IMR-90 (cell line): ENCODE measurements at regions of chr20 and their contacts with region 1.

Region 1: GRCh38 chr20:57493091-57493615 is 31.8 kb downstream of the CTCFL start:
- DNase-seq: no peak
- ATAC-seq: no peak
- H3K4me3 ChIP-seq: no peak overlapping the region
- H3K27ac ChIP-seq: no peak overlapping the region
- H3K4me1 ChIP-seq: no peaks in the 10 kb centered on the region
- H3K27me3 ChIP-seq: peaks cover 2% of the 10 kb centered on the region
- CTCF ChIP-seq: no peak
- POLR2A ChIP-seq: no peak
- RAD21 ChIP-seq: no peak

Region 2: DNA sequence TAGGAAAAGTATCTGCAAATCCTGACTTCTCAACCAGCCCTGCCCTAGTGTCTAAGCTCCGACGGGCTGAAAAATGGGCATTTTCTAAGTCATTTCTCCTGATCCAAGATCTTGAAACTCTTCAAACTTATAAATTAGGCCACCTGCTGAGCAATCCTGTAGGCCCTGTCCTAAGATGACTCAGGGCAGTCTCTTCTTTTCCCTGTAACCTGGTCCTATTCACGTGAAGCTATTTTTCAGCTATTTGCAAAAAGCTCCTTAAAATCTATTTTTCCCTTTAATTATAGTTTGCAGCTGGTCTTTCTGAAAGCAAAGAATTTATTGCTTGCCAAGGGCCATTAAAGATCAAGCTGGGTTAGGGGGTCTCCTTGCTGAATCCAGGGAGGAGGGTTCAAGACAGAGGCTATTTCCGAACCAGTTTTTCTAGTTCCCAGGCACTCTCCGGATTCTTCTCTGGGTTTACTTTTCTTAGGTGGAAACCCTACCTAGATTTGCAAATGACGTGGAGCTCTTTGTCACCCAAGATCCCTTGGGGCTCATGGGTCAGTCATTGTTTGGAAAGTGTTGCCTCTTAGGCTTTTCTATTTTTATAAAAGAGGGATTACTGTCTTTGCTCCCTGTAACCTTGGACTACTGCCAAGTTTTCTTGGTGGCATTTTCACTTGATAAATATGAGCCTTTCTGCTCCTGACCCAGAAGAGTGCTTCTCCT is 926.7 kb before region 1 on chr20:
- CTCF ChIA-PET with region 1: no interaction called
- POLR2A ChIA-PET with region 1: no interaction called
- dilution Hi-C with region 1: no loop called
- in situ Hi-C with region 1: no loop called
- intact Hi-C with region 1: loop called (anchors 5 kb)
- DNase-seq: no peak
- ATAC-seq: no peak
- H3K4me3 ChIP-seq: no peak overlapping the region
- H3K27ac ChIP-seq: no peak overlapping the region
- H3K4me1 ChIP-seq: no peaks in the 10 kb centered on the region
- H3K27me3 ChIP-seq: peaks cover 4% of the 10 kb centered on the region
- CTCF ChIP-seq: no peak
- POLR2A ChIP-seq: no peak
- RAD21 ChIP-seq: no peak

Region 3: GRCh38 chr20:57323034-57323433 is 170.1 kb before region 1 on chr20:
- CTCF ChIA-PET with region 1: no interaction called
- POLR2A ChIA-PET with region 1: no interaction called
- dilution Hi-C with region 1: no loop called
- in situ Hi-C with region 1: no loop called
- intact Hi-C with region 1: no loop called
- DNase-seq: no peak
- ATAC-seq: no peak
- H3K4me3 ChIP-seq: no peak overlapping the region
- H3K27ac ChIP-seq: no peak overlapping the region
- H3K4me1 ChIP-seq: no peaks in the 10 kb centered on the region
- H3K27me3 ChIP-seq: peaks cover 4% of the 10 kb centered on the region; the same call in 1 of the 2 replicates
- CTCF ChIP-seq: no peak
- POLR2A ChIP-seq: no peak
- RAD21 ChIP-seq: no peak

Region 4: GRCh38 chr20:57420531-57421252 is 72.5 kb before region 1 on chr20:
- CTCF ChIA-PET with region 1: no interaction called
- POLR2A ChIA-PET with region 1: no interaction called
- dilution Hi-C with region 1: no loop called
- in situ Hi-C with region 1: no loop called
- intact Hi-C with region 1: no loop called
- DNase-seq: no peak
- ATAC-seq: no peak
- H3K4me3 ChIP-seq: no peak overlapping the region
- H3K27ac ChIP-seq: no peak overlapping the region
- H3K4me1 ChIP-seq: no peaks in the 10 kb centered on the region
- H3K27me3 ChIP-seq: peaks cover 23% of the 10 kb centered on the region; the same call in 1 of the 2 replicates
- CTCF ChIP-seq: no peak
- POLR2A ChIP-seq: no peak
- RAD21 ChIP-seq: no peak

Region 5: DNA sequence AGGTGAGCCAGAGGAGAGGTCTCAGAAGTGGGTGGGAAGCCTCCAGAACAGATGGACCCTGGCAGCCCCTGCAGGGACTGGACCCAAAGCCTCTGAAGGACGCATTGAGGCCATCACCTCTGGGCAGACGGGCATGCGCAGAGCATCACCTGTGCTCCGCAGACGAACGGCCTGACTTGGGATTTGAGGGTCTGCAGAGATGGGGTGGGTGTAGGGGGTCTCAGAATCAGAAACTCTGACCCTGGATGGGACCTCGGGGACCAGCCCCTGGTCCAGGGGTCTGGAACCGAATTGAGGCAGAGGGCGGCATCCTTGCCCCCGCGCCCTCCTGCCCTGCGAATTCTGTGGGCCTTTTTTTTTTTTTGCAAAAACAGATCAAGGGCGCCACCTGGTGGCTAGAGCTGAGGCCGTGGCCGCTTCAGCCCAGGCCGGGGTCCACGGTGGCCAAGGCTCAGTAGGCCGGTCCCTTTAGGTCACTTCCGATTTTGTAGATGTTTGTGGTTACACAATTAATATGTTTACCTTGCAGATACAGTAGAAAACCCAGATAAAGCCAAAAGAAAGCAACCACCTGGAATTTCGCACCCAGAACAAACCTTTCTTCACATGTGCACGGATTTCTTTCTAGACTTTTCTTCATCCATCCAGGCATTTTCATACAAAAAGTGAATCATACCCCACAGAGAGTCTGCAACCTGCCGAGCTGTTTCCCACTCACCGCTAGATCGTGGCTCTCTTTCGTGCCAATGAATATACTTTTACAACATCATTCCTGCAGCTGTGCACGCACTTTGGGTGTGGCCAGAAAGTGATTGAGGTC is 101.1 kb after region 1 on chr20:
- CTCF ChIA-PET with region 1: no interaction called
- POLR2A ChIA-PET with region 1: no interaction called
- dilution Hi-C with region 1: no loop called
- in situ Hi-C with region 1: no loop called
- intact Hi-C with region 1: no loop called
- DNase-seq: peak; percentile 8
- ATAC-seq: peak; percentile 51; the same call in 1 of the 2 replicates
- H3K4me3 ChIP-seq: no peak overlapping the region
- H3K27ac ChIP-seq: no peak overlapping the region
- H3K4me1 ChIP-seq: no peaks in the 10 kb centered on the region
- H3K27me3 ChIP-seq: peaks cover 11% of the 10 kb centered on the region; the same call in 1 of the 2 replicates
- CTCF ChIP-seq: peak; percentile 75
- POLR2A ChIP-seq: no peak
- RAD21 ChIP-seq: peak; percentile 64